IMR-90 (cell line): ENCODE measurements at regions of chr17 and their contacts with region 1.

Region 1: DNA sequence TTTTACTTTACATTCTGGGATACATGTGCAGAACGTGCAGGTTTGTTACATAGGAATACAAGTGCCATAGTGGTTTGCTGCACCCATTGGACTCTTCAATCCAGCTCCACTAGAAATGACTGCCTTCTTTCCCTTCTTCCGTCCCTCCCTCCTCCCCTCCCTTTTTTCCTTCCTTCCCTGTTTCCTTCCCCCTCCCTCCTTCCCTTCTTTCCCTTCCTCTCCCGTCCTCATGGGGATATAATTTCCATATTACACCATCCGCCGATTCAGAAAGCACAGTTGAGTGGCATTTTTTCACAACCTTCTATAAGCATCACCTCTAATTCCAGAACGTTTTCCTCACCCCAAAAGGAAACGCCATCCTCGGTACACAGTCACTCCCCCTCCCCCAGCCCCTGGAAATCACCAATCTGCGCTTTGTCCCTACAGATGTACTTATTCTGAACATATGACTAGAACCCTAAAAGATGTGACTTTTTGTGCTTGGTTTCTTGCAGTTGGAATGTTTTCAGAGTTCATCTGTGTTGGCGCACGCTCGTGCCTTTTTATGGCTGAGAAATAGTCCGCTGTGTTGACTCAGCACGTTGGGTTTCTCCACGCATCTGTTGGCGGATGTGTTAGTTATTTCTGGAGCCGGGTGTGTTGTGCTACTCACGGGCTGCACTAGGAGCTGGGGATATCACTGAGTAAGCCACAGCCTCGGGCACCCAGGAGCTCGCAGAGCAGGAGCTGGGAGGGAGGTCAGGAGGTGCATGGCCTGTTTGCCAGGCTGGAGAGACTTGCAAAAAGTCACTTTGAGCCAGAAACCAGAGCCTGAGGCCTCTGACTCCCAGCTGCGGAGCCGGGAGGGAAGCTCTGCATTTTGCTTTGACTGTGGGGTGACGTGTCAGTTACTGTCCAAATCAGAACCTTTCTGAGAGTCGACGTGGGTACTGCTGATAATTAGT is 336.4 kb downstream of the SEC14L1 start:
- DNase-seq: peak; percentile 98
- ATAC-seq: peak; percentile 76
- H3K4me3 ChIP-seq: no peak overlapping the region
- H3K27ac ChIP-seq: peak overlapping the region; percentile 38
- H3K4me1 ChIP-seq: peaks cover 68% of the 10 kb centered on the region
- H3K27me3 ChIP-seq: no peaks in the 10 kb centered on the region
- CTCF ChIP-seq: no peak
- POLR2A ChIP-seq: no peak; the same call in 1 of the 2 replicates
- RAD21 ChIP-seq: peak; percentile 27

Region 2: GRCh38 chr17:77331301-77331864 is 145.8 kb before region 1 on chr17:
- CTCF ChIA-PET with region 1: no interaction called
- POLR2A ChIA-PET with region 1: no interaction called
- dilution Hi-C with region 1: no loop called
- in situ Hi-C with region 1: no loop called
- intact Hi-C with region 1: loop called (anchors 5 kb)
- DNase-seq: peak; percentile 87
- ATAC-seq: peak; percentile 95
- H3K4me3 ChIP-seq: no peak overlapping the region
- H3K27ac ChIP-seq: peak overlapping the region; percentile 71
- H3K4me1 ChIP-seq: peaks cover 3% of the 10 kb centered on the region
- H3K27me3 ChIP-seq: no peaks in the 10 kb centered on the region
- CTCF ChIP-seq: peak; percentile 96
- POLR2A ChIP-seq: peak; percentile 45; the same call in 1 of the 2 replicates
- RAD21 ChIP-seq: peak; percentile 99

Region 3: DNA sequence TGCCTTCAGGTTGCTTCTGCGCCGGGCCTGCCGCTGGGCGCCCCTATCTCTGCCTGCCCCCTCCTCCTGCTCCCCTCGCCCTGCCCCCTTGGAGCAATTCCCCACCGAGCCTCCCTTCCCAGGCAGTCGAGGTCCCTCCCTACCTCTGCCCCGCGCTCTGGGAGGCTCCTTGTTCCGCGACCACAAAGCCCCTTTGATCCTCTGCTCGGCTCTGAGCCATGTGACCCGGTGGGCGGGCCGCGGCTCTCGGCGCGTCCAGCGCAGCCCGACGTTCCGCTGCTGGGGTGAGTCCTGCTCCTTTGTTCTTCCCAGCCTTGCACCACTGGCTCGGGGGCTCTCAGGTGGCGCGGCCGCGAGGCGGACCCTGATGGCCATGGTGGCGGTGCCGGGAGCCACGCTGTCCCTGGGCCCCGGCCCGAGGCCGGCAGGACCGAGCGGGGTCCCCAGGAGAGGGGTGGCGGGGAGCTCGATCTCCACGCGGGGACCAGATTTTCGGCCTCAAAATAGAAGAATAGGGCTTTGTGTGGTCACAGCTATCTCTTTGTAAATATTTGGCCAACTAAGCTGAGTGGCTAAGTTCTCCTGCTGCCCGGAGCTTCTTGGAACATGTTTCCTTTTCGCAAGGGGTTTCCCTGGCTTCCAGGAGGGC is 25.8 kb before region 1 on chr17:
- CTCF ChIA-PET with region 1: no interaction called
- POLR2A ChIA-PET with region 1: no interaction called
- dilution Hi-C with region 1: no loop called
- in situ Hi-C with region 1: no loop called
- intact Hi-C with region 1: loop called (anchors 2 kb)
- DNase-seq: peak; percentile 69
- ATAC-seq: peak; percentile 36
- H3K4me3 ChIP-seq: peak overlapping the region; percentile 39
- H3K27ac ChIP-seq: peak overlapping the region; percentile 80
- H3K4me1 ChIP-seq: peaks cover 63% of the 10 kb centered on the region
- H3K27me3 ChIP-seq: no peaks in the 10 kb centered on the region
- CTCF ChIP-seq: no peak
- POLR2A ChIP-seq: no peak
- RAD21 ChIP-seq: no peak